Gastrocnemius medialis (tissue), 4 donors: ENCODE measurements at regions of chr3 and their contacts with region 1.

Region 1: GRCh38 chr3:128617557-128618397 is 32.8 kb downstream of the RPN1 start:
- DNase-seq: peak; percentile 95 to 97
- ATAC-seq: peak; percentile 90 to 96
- H3K4me3 ChIP-seq: peak overlapping the region; percentile 73 to 96 (median 84)
- H3K27ac ChIP-seq: peak overlapping the region; percentile 85 to 95 (median 90)
- H3K4me1 ChIP-seq: peaks cover 19 to 20% of the 10 kb centered on the region in 2 donors
- H3K27me3 ChIP-seq: no peaks in the 10 kb centered on the region
- CTCF ChIP-seq: peak; percentile 94 to 99 (median 95)
- POLR2A ChIP-seq: peak in 1 of 2 donors; percentile 39

Region 2: GRCh38 chr3:128095222-128095703 is 522.5 kb before region 1 on chr3:
- in situ Hi-C with region 1: loop called in 2 of 4 experiments (anchors 25 kb)
- intact Hi-C with region 1: no loop called
- DNase-seq: peak in 1 of 2 donors; percentile 72
- ATAC-seq: peak; percentile 81 to 95
- H3K4me3 ChIP-seq: no peak overlapping the region
- H3K27ac ChIP-seq: no peak overlapping the region
- H3K4me1 ChIP-seq: peaks cover 0 to 4% of the 10 kb centered on the region in 2 donors
- H3K27me3 ChIP-seq: no peaks in the 10 kb centered on the region
- CTCF ChIP-seq: peak; percentile 68 to 81 (median 78)
- POLR2A ChIP-seq: no peak

Region 3: DNA sequence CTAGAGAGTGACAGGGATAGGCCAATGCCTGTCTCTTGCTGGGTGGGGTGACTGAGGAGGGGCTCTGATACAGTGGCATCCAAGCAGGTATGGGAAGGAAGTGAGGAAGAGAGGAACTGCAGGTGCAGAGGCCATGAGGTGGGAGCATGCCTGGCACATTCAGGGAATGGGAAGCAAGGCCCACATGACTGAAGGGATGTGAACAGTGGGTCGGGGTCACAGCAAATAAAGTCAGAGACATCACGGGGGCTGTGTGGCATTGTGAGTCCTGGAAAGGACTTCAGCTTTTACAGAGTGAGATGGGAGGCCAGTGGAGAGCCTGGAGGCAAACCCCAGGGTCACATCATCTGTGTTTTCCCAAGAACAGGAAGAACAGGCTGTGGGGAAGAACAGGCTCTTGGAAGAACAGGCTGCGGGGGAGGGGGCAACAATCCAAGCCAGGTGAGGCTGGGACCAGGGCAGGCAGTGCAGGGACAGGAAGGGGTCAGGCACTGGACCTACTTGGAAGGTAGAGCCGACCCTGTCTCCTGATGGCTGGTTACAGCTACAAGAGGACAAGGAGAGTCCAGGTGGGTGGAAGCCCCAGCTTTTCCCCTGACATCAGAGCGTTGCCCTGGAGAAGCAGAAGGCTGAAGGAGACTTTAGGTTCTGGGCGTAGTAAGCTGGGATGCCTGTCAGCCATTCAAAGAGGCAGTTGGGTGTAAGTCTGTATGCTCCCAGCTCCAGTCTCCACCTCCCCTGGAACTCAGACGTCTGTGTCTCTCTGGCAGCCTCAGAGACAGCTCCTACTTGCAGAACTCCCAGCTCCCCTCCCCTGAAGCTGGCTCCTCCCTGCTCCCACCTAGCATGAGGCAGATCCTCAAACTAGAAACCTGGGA is 282.2 kb before region 1 on chr3:
- in situ Hi-C with region 1: no loop called
- intact Hi-C with region 1: no loop called
- DNase-seq: no peak
- ATAC-seq: no peak
- H3K4me3 ChIP-seq: no peak overlapping the region
- H3K27ac ChIP-seq: no peak overlapping the region
- H3K4me1 ChIP-seq: peaks cover 18 to 20% of the 10 kb centered on the region in 2 donors
- H3K27me3 ChIP-seq: no peaks in the 10 kb centered on the region
- CTCF ChIP-seq: no peak
- POLR2A ChIP-seq: no peak

Region 4: GRCh38 chr3:128650096-128651050 is 32.6 kb after region 1 on chr3 and contains the start of gene RPN1:
- in situ Hi-C with region 1: no loop called
- intact Hi-C with region 1: loop called (anchors 1 kb)
- DNase-seq: peak; percentile 97 to 98
- ATAC-seq: peak; percentile 96
- H3K4me3 ChIP-seq: peak within 1 kb of the TSS; percentile 90 to 100 (median 95)
- H3K27ac ChIP-seq: peak within 1 kb of the TSS; percentile 97 to 100 (median 100)
- H3K4me1 ChIP-seq: peaks cover 16 to 17% of the 10 kb centered on the region in 2 donors
- H3K27me3 ChIP-seq: no peaks in the 10 kb centered on the region
- CTCF ChIP-seq: no peak
- POLR2A ChIP-seq: peak; percentile 77 to 87
- total RNA-seq, gene RPN1: 197 to 219 (median 212) TPM

Region 5: DNA sequence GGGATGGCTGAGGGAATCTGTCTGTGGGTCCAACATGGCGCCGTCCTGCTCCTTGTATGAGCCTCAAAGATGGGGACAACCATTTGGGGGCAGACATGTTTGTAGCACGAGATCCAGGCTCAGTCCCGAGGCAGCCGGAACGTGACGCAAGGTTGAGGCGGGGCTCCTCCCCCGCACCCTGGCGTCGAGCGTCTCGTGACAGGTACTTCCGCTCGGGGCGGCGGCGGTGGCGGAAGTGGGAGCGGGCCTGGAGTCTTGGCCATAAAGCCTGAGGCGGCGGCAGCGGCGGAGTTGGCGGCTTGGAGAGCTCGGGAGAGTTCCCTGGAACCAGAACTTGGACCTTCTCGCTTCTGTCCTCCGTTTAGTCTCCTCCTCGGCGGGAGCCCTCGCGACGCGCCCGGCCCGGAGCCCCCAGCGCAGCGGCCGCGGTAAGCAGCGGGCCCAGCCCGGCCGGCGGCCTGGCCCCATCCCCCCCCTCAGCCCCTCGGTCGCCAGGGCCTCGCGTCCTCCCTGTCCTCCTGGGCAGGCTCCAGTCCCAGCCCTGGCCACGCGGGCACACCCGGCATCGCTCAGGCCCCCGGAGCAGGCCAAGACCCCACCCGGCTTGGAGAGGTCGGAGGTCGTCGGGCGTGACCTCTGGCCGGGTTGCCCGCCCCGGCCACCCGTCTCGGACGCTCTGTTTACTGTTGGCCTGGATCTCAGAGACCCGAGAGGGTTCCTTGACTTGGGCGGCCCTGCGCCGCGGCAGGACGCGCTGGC is 108.3 kb after region 1 on chr3 and contains the start of gene RAB7A:
- in situ Hi-C with region 1: no loop called
- intact Hi-C with region 1: loop called (anchors 5 kb)
- DNase-seq: peak; percentile 98 to 99
- ATAC-seq: peak; percentile 86 to 93
- H3K4me3 ChIP-seq: peak within 1 kb of the TSS; percentile 80 to 99 (median 92)
- H3K27ac ChIP-seq: peak within 1 kb of the TSS; percentile 96 to 99 (median 98)
- H3K4me1 ChIP-seq: peaks cover 39 to 44% of the 10 kb centered on the region in 2 donors
- H3K27me3 ChIP-seq: no peaks in the 10 kb centered on the region
- CTCF ChIP-seq: peak in 3 of 5 experiments; percentile 9 to 27 (median 16)
- POLR2A ChIP-seq: peak; percentile 99
- total RNA-seq, gene RAB7A: 102 to 190 (median 149) TPM

Region 6: GRCh38 chr3:128794770-128795649 is 177.2 kb after region 1 on chr3:
- in situ Hi-C with region 1: loop called in 1 of 4 experiments (anchors 10 kb)
- intact Hi-C with region 1: loop called (anchors 2 kb)
- DNase-seq: peak; percentile 51 to 67
- ATAC-seq: peak; percentile 57 to 68
- H3K4me3 ChIP-seq: no peak overlapping the region
- H3K27ac ChIP-seq: peak overlapping the region; percentile 94 to 99 (median 96)
- H3K4me1 ChIP-seq: peaks cover 41 to 66% of the 10 kb centered on the region in 2 donors
- H3K27me3 ChIP-seq: no peaks in the 10 kb centered on the region
- CTCF ChIP-seq: peak; percentile 75 to 89 (median 85)
- POLR2A ChIP-seq: no peak

Region 7: GRCh38 chr3:128845778-128846485 is 228.2 kb after region 1 on chr3:
- in situ Hi-C with region 1: no loop called
- intact Hi-C with region 1: loop called (anchors 1 kb)
- DNase-seq: peak; percentile 67 to 86
- ATAC-seq: peak; percentile 67 to 87
- H3K4me3 ChIP-seq: peak overlapping the region; percentile 46 to 70 (median 52)
- H3K27ac ChIP-seq: peak overlapping the region; percentile 78 to 90 (median 84)
- H3K4me1 ChIP-seq: peaks cover 7 to 12% of the 10 kb centered on the region in 2 donors
- H3K27me3 ChIP-seq: no peaks in the 10 kb centered on the region
- CTCF ChIP-seq: peak; percentile 60 to 90 (median 86)
- POLR2A ChIP-seq: no peak